CD8-positive, alpha-beta T cell (primary cell): ENCODE measurements at regions of chr19 and their contacts with region 1.

Region 1: DNA sequence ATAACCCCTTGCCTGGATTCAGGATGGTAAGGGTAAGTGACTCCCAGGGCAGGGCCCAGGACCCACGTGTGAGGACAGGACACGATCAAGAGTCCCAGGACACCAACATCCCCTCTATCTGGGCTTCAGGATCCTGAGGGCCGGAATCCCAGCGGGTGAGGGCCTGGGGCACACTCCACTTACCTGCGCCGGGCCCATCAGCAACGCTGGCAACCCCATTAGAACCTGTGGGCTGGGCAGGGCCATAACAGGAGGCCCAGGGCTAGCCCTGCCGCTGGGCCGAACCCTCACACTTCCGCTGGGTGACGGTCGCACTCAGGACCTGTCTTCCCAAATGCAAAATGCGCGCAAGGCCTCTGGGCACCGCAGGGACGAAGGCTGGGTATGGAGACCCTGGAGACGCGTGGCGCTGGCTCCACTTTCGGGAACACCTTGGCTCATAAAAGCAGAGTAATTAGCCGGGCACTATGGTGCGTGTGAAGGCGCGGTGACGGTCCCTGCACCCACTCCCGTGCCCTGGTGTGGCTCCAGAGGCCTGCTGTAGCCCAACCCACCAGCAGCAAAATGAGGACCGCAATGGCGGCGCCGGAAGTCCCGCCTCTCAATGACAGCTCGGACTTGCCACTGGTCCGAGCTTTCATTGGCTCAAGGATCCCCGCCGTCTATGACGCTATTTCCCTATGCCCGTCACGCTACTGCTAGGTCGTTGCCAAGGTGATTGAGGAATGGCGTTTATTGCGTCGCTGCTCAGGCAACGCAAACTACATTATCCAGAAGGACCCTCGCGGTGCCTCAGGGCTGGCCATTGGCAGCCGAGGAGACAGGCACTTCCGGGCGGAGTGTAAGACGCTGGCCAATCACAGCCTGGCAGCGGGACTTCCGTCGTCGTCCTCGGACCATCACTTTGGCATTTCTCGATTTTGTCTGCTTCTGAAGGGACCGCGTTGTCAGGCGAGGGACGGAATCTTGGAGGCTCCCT is at the start of gene ZNF132:
- DNase-seq: peak; percentile 85 to 100 (median 92)
- ATAC-seq: peak; percentile 97
- H3K4me3 ChIP-seq: peak within 1 kb of the TSS; percentile 76 to 81
- H3K4me3 Mint-ChIP-seq: peak within 1 kb of the TSS; percentile 91
- H3K27ac ChIP-seq: peak within 1 kb of the TSS; percentile 70 to 91
- H3K27ac Mint-ChIP-seq: peak within 1 kb of the TSS; percentile 96
- H3K4me1 ChIP-seq: peaks cover 16% of the 10 kb centered on the region
- H3K4me1 Mint-ChIP-seq: peaks cover 29% of the 10 kb centered on the region
- H3K27me3 ChIP-seq: no peaks in the 10 kb centered on the region
- H3K27me3 Mint-ChIP-seq: no peaks in the 10 kb centered on the region
- CTCF ChIP-seq: no peak
- total RNA-seq, gene ZNF132: 0.75 to 1.3 TPM

Region 2: GRCh38 chr19:57389730-57390598 is 1049.9 kb before region 1 on chr19 and contains the start of gene ZNF548:
- CTCF ChIA-PET with region 1: no interaction called
- POLR2A ChIA-PET with region 1: no interaction called
- intact Hi-C with region 1: loop called in 1 of 2 experiments (anchors 1 kb)
- DNase-seq: peak; percentile 93 to 100 (median 98)
- ATAC-seq: peak; percentile 95
- H3K4me3 ChIP-seq: peak within 1 kb of the TSS; percentile 79 to 93
- H3K4me3 Mint-ChIP-seq: peak within 1 kb of the TSS; percentile 95
- H3K27ac ChIP-seq: peak within 1 kb of the TSS; percentile 92 to 98
- H3K27ac Mint-ChIP-seq: peak within 1 kb of the TSS; percentile 97
- H3K4me1 ChIP-seq: peaks cover 19% of the 10 kb centered on the region
- H3K4me1 Mint-ChIP-seq: peaks cover 43% of the 10 kb centered on the region
- H3K27me3 ChIP-seq: no peaks in the 10 kb centered on the region
- H3K27me3 Mint-ChIP-seq: no peaks in the 10 kb centered on the region
- CTCF ChIP-seq: no peak
- total RNA-seq, gene ZNF548: 75.4 to 79.1 TPM

Region 3: GRCh38 chr19:58305065-58305931 is 134.6 kb before region 1 on chr19 and contains the start of gene ERVK3-1:
- CTCF ChIA-PET with region 1: no interaction called
- POLR2A ChIA-PET with region 1: interaction called, 3 read pairs
- intact Hi-C with region 1: loop called in 1 of 2 experiments (anchors 1 kb)
- DNase-seq: peak; percentile 89 to 99 (median 93)
- ATAC-seq: peak; percentile 96
- H3K4me3 ChIP-seq: peak within 1 kb of the TSS; percentile 82 to 89
- H3K4me3 Mint-ChIP-seq: peak within 1 kb of the TSS; percentile 98
- H3K27ac ChIP-seq: peak within 1 kb of the TSS; percentile 93 to 95
- H3K27ac Mint-ChIP-seq: peak within 1 kb of the TSS; percentile 99
- H3K4me1 ChIP-seq: peaks cover 27% of the 10 kb centered on the region
- H3K4me1 Mint-ChIP-seq: peaks cover 53% of the 10 kb centered on the region
- H3K27me3 ChIP-seq: no peaks in the 10 kb centered on the region
- H3K27me3 Mint-ChIP-seq: no peaks in the 10 kb centered on the region
- CTCF ChIP-seq: no peak
- total RNA-seq, gene ERVK3-1: 174 to 182 TPM

Region 4: DNA sequence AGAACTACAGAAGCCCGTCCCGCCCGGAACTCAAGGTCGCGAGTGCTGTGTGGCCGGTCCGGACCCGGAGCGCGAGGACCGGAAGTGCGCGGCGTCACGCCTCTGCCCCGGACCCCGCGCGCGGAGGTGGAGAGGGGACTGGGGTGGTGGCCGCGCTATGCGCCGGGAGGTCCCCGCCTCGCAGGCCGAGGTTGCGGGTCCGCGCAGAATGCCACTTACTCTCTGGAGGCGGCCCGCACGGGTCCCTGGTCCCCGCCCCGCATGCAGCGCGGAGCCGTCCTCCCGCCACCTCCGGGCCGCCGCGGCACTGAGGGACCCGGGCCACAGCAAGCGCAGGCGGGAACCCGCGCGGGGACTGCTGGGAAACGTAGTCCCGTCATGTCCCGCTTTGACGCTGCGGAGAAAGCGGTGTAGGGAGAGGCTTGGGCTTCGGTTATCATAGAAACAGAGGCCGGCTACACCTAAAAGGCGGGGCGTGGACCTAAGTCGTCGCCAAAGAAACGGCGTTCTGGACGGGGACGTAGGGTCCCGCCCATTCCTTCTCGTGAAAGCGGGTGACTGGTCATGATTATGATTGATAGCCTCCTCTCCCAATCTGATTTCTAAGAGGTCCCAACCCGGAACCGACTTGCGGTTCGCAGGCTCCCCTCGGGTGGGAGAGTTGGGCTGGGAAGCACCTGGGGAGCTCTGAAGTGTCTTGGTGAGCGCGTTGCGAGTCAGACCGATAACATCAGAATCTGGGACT is 59.0 kb before region 1 on chr19 and contains the start of gene ZNF837:
- CTCF ChIA-PET with region 1: no interaction called
- POLR2A ChIA-PET with region 1: no interaction called
- intact Hi-C with region 1: loop called (anchors 1 kb)
- DNase-seq: peak; percentile 94 to 100 (median 97)
- ATAC-seq: peak; percentile 82
- H3K4me3 ChIP-seq: peak within 1 kb of the TSS; percentile 62 to 92
- H3K4me3 Mint-ChIP-seq: peak within 1 kb of the TSS; percentile 98
- H3K27ac ChIP-seq: peak within 1 kb of the TSS; percentile 90 to 96
- H3K27ac Mint-ChIP-seq: peak within 1 kb of the TSS; percentile 98
- H3K4me1 ChIP-seq: peaks cover 31% of the 10 kb centered on the region
- H3K4me1 Mint-ChIP-seq: peaks cover 35% of the 10 kb centered on the region
- H3K27me3 ChIP-seq: no peaks in the 10 kb centered on the region
- H3K27me3 Mint-ChIP-seq: no peaks in the 10 kb centered on the region
- CTCF ChIP-seq: no peak
- total RNA-seq, gene ZNF837: 1.2 to 1.3 TPM

Region 5: GRCh38 chr19:58408152-58409009 is 31.5 kb before region 1 on chr19 and contains the start of gene ZNF584:
- CTCF ChIA-PET with region 1: no interaction called
- POLR2A ChIA-PET with region 1: interaction called, 3 read pairs
- intact Hi-C with region 1: loop called (anchors 1 kb)
- DNase-seq: peak; percentile 80 to 96 (median 93)
- ATAC-seq: peak; percentile 97
- H3K4me3 ChIP-seq: peak within 1 kb of the TSS; percentile 75 to 79
- H3K4me3 Mint-ChIP-seq: peak within 1 kb of the TSS; percentile 97
- H3K27ac ChIP-seq: peak within 1 kb of the TSS; percentile 67 to 85
- H3K27ac Mint-ChIP-seq: peak within 1 kb of the TSS; percentile 96
- H3K4me1 ChIP-seq: peaks cover 22% of the 10 kb centered on the region
- H3K4me1 Mint-ChIP-seq: peaks cover 33% of the 10 kb centered on the region
- H3K27me3 ChIP-seq: no peaks in the 10 kb centered on the region
- H3K27me3 Mint-ChIP-seq: no peaks in the 10 kb centered on the region
- CTCF ChIP-seq: no peak
- total RNA-seq, gene ZNF584: 1.2 to 1.7 TPM

Region 6: GRCh38 chr19:58475714-58476497 is 36.0 kb after region 1 on chr19 and contains the start of gene ZNF446:
- CTCF ChIA-PET with region 1: no interaction called
- POLR2A ChIA-PET with region 1: no interaction called
- intact Hi-C with region 1: loop called (anchors 1 kb)
- DNase-seq: peak; percentile 92 to 99 (median 97)
- ATAC-seq: peak; percentile 82
- H3K4me3 ChIP-seq: peak within 1 kb of the TSS; percentile 56 to 72
- H3K4me3 Mint-ChIP-seq: peak within 1 kb of the TSS; percentile 92
- H3K27ac ChIP-seq: peak within 1 kb of the TSS; percentile 75 to 95
- H3K27ac Mint-ChIP-seq: peak within 1 kb of the TSS; percentile 97
- H3K4me1 ChIP-seq: peaks cover 17% of the 10 kb centered on the region
- H3K4me1 Mint-ChIP-seq: peaks cover 16% of the 10 kb centered on the region
- H3K27me3 ChIP-seq: no peaks in the 10 kb centered on the region
- H3K27me3 Mint-ChIP-seq: no peaks in the 10 kb centered on the region
- CTCF ChIP-seq: no peak
- total RNA-seq, gene ZNF446: 14.6 to 16.5 TPM

Region 7: DNA sequence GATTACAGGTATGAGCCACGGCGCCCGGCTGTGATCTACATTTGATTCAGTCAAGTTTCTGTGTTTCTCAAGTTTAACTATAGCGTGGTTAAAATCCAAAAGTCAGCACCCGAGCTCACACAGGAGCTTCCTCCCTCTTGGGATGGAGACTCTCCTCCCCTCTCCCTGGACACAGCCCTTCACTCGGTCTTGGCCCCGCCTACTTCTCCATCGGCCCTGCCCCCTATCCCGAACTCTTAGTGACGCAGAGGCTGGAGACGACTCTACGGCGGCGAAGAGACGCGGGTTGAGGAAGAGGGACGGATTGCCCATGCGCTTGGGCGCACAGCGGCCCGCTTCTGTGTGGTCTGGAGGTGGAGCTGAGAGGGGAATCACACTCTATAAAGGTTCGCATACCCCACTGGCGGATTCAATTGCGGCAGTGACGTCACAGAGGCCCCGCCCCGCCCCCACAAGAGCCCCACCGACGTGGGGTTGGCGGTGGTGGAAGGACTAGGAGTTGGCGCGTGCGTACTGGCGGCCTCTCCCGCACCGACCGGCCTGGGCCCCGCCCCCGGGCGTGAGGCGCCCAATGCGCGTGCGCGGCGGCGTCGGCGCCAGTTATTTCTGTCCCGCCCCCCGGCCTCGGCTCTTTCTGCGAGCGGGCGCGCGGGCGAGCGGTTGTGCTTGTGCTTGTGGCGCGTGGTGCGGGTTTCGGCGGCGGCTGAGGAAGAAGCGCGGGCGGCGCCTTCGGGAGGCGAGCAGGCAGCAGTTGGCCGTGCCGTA is 104.1 kb after region 1 on chr19 and contains the start of gene TRIM28:
- CTCF ChIA-PET with region 1: no interaction called
- POLR2A ChIA-PET with region 1: no interaction called
- intact Hi-C with region 1: loop called in 1 of 2 experiments (anchors 1 kb)
- DNase-seq: peak; percentile 99 to 100 (median 100)
- ATAC-seq: peak; percentile 85
- H3K4me3 ChIP-seq: peak within 1 kb of the TSS; percentile 68 to 71
- H3K4me3 Mint-ChIP-seq: peak within 1 kb of the TSS; percentile 93
- H3K27ac ChIP-seq: peak within 1 kb of the TSS; percentile 90 to 93
- H3K27ac Mint-ChIP-seq: peak within 1 kb of the TSS; percentile 99
- H3K4me1 ChIP-seq: peaks cover 17% of the 10 kb centered on the region
- H3K4me1 Mint-ChIP-seq: peaks cover 24% of the 10 kb centered on the region
- H3K27me3 ChIP-seq: peaks cover 0 to 13% of the 10 kb centered on the region in 2 experiments
- H3K27me3 Mint-ChIP-seq: peaks cover 10% of the 10 kb centered on the region
- CTCF ChIP-seq: no peak
- total RNA-seq, gene TRIM28: 525 to 549 TPM